Prostate gland (tissue), 2 donors: ENCODE measurements at regions of chr15 and their contacts with region 1.

Region 1: DNA sequence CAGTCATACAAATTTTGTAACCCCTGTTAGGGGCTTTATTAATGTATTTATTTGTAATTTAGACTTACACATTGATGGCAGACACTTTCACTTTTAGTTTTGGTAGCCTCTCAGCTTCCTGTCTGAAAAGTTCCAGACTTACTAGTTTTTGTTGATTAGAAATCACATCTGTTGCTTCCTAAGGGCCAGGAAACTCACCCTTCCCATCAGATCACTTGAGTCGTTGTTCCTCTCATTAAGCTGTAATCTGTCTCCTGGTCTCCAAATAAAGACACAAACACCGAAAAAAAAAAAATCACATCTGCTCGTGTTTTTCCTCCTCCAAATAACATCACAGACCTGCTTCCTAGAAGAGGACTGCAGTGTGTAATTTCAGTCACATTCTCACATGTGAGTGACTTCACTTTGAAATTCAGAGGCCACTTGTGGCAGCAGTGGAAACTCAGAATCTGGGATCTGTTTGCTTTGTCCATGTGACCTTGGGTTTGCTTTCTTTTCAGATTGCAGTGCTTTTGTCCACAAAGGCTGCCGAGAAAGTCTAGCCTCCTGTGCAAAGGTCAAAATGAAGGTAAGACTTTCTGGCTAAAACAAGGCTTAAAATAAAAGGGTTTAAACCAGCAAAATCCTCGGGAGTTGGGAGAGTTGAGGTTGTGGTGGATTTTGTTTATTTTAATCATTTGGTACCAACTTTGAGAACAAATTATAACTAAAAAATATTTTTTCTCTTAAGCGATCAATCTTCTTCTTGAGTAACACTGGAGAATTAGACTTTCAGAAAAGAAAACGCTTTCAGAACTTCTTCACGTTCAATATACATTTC is 87.0 kb downstream of the KLHL25 start:
- DNase-seq: no peak
- H3K4me3 ChIP-seq: no peak overlapping the region
- H3K27ac ChIP-seq: peak overlapping the region; percentile 62 to 73
- H3K4me1 ChIP-seq: peaks cover 3% of the 10 kb centered on the region
- H3K27me3 ChIP-seq: no peaks in the 10 kb centered on the region
- CTCF ChIP-seq: no peak
- POLR2A ChIP-seq: no peak

Region 2: DNA sequence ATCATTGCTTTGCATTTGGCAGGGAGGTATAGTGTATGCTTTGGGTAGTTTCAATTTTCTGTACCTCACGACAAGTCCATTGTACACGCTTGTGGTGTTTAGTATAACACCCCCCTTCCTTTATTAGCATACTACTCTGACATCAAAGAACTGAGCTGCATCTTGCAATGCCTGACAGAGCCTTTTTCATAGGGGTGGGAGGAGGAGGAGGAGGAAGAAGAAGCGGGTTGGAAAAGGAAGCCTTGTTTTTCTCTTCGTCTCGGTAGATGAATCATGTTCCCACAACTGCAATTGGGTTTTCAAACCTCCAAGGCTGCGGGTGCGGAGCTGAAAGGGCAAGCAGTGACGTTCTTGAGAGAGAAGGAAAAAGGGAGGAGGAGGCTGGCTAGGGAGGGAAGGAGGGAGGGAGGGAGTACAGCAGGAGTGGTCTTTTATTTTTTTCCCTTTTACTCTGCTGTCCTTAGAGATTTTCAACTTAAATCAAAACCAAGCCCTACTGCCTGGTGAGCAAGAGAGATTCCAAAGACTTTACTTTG is 88.7 kb before region 1 on chr15:
- intact Hi-C with region 1: loop called (anchors 5 kb)
- DNase-seq: peak; percentile 47
- H3K4me3 ChIP-seq: peak overlapping the region; percentile 12
- H3K27ac ChIP-seq: peak overlapping the region; percentile 60 to 66
- H3K4me1 ChIP-seq: no peaks in the 10 kb centered on the region
- H3K27me3 ChIP-seq: no peaks in the 10 kb centered on the region
- CTCF ChIP-seq: no peak
- POLR2A ChIP-seq: peak; percentile 7